ENCODE measurements at regions of chr1 and their contacts with region 1.

Region 1: DNA sequence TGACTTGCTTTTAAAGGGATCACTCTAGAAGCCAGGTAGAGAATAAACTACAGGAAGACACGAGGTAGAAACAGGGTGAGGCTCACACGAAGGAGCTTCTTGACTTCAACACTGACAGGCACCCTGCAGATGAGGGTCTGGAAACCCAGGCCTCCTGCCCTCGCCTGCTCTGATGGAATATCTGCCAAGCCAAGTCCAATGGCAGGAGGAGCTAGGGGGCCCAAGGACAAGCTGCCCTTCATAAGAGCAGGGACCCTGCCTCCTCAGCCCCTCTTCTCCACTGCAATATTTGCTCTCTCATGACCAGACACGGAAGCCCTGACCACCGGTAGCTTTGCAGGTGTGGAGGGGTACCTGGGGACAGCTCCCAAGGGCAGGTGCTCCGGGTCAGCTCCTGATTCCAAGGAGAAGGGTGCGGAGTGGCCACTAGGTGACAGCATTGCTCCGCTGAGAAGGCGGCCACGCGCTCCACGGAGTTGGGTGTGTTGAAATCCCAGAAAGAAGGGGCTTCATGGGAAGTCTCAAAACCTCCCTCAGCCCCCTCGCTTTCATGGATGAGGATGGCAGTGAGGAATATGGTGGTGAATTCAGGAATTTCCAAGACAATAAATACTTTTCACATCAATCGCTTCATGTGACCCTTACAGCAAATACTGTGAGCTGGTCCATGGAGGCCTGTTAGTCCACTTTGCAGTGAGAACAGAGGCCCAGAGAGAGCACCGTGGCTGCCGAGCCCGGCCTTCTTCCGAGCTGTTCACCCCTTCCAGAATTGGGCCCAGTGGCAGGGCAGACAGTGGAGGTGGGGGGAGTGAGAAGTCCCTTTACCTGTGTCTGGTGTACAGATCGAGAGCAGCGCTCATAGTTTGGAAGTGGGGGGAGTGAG is 33.2 kb upstream of the PAX7 start:
- DNase-seq: peak in 3 of 4 donors; percentile 49 to 87 (median 65)
- ATAC-seq: peak; percentile 95
- H3K4me3 ChIP-seq: no peak overlapping the region
- H3K27ac ChIP-seq: no peak overlapping the region
- H3K4me1 ChIP-seq: no peaks in the 10 kb centered on the region
- H3K27me3 ChIP-seq: peaks cover 10 to 81% of the 10 kb centered on the region in 2 donors
- CTCF ChIP-seq: peak; percentile 65 to 86

Region 2: GRCh38 chr1:18820791-18821641 is 223.6 kb after region 1 on chr1:
- intact Hi-C with region 1: loop called in 1 of 2 experiments (anchors 2 kb)
- DNase-seq: peak; percentile 52 to 88 (median 64)
- ATAC-seq: peak; percentile 98
- H3K4me3 ChIP-seq: no peak overlapping the region
- H3K27ac ChIP-seq: no peak overlapping the region
- H3K4me1 ChIP-seq: no peaks in the 10 kb centered on the region
- H3K27me3 ChIP-seq: peaks cover 0 to 54% of the 10 kb centered on the region in 2 donors
- CTCF ChIP-seq: peak; percentile 79 to 82